ENCODE measurements at regions of chr9 and their contacts with region 1.

Region 1: GRCh38 chr9:20811872-20812271 is 127.8 kb downstream of the FOCAD start:
- DNase-seq: no peak
- H3K4me3 ChIP-seq: no peak overlapping the region
- H3K27ac ChIP-seq: no peak overlapping the region
- H3K27me3 ChIP-seq: no peaks in the 10 kb centered on the region
- CTCF ChIP-seq: no peak

Region 2: DNA sequence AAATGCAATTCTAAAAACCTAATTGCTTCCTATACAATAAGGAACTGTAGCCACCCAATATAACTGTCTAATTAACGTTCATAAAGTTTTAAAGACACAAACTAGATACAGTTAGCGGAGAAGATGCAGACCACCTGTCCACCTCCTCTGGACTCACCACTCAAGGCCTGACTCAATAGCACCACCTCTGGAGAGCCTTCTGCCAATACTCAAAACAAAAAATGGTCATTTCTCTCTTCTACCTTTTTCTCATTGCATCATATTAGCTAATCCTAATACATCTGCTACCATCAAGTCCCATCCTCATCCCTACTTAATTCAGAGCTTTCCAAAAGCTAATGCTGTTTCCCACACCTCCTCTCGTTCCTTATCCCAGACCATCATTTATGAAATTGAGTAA is 349.5 kb before region 1 on chr9:
- CTCF ChIA-PET with region 1: interaction called, 11 read pairs
- POLR2A ChIA-PET with region 1: no interaction called
- DNase-seq: no peak
- H3K4me3 ChIP-seq: no peak overlapping the region
- H3K27ac ChIP-seq: no peak overlapping the region
- H3K27me3 ChIP-seq: no peaks in the 10 kb centered on the region
- CTCF ChIP-seq: no peak

Region 3: DNA sequence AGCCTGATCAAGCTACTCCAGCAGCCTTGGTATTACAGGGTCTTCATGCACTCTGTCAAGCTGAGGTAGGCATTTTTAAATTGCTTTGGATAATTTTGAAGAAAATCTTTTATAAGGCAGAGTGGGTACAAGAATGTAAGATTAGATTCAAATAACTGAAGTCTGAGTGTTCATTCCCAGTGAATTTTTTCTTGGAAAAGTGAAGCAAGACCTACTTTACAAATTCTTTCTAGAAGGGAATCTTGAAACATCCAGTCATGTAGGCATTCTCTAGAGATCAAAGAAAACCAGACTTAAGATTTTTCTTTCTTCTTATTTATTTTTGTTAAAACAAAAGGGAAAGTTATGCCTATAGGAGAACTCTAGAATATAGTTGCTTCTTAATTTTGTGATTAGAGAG is 11.2 kb after region 1 on chr9:
- CTCF ChIA-PET with region 1: no interaction called
- POLR2A ChIA-PET with region 1: no interaction called
- DNase-seq: no peak
- H3K4me3 ChIP-seq: no peak overlapping the region
- H3K27ac ChIP-seq: no peak overlapping the region
- H3K27me3 ChIP-seq: no peaks in the 10 kb centered on the region
- CTCF ChIP-seq: no peak